ENCODE measurements at regions of chr16 and their contacts with region 1.

Region 1: GRCh38 chr16:9578459-9578858 is 487.0 kb downstream of the HAPSTR1 start:
- DNase-seq: no peak
- H3K4me3 ChIP-seq: no peak overlapping the region
- H3K27ac ChIP-seq: no peak overlapping the region
- H3K4me1 ChIP-seq: no peaks in the 10 kb centered on the region
- H3K27me3 ChIP-seq: no peaks in the 10 kb centered on the region

Region 2: GRCh38 chr16:9372934-9373890 is 205.2 kb before region 1 on chr16:
- in situ Hi-C with region 1: no loop called
- DNase-seq: no peak
- H3K4me3 ChIP-seq: no peak overlapping the region
- H3K27ac ChIP-seq: no peak overlapping the region
- H3K4me1 ChIP-seq: no peaks in the 10 kb centered on the region
- H3K27me3 ChIP-seq: no peaks in the 10 kb centered on the region

Region 3: DNA sequence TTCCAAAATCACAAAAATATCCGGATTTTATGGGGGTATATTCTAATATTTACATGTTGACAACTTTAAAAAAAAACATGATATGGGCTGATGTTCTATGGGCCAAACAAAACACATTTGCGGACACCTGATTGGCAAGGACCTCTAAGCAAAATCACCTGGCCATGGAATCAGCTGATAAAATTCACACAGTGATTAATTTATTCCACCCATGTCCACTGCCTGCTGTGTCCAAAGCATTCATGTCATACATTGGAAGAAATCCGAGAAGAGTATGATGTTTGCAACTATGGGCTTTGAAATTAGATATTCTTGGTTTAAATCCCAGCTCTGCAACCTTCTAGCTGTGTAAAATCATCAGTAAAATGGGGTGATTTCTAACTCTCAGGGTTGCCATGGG is 51.7 kb after region 1 on chr16:
- in situ Hi-C with region 1: loop called (anchors 10 kb)
- DNase-seq: no peak
- H3K4me3 ChIP-seq: no peak overlapping the region
- H3K27ac ChIP-seq: no peak overlapping the region
- H3K4me1 ChIP-seq: no peaks in the 10 kb centered on the region
- H3K27me3 ChIP-seq: no peaks in the 10 kb centered on the region

Measured in GM23248 (cell line).